Stomach (tissue), 19 donors: ENCODE measurements at regions of chr2 and their contacts with region 1.

Region 1: DNA sequence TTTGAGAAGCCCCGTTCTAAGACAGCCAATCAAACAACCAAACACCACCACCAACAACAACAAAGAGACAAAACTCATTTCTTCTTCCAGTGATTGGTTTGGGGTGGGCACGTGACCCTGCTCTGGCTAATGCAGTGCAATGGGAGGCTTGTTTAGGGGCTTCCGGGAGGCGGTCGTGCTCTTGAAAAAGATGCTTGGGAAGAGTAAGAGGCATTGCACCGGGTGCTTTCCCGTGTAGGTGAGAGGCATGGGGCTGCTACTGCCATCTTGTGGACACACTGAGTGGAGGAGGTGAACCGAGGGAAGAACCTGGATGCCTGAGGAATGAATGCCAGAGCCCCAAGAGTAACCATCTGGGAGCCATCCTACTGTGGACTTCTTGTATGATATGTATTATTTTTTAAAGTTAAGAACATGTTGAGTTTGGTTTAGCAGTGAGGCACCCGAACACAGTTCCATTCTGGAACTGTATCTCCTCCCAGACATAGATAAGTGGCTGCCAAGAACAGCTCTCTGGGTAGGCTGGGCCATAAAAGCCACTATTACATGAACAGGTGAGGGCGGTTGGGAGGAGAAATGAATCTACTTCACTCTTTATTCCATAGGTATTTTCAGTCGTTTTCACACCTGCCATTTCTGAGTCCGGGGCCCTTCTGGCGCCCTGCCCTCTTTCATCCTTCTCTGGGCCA is 19.1 kb upstream of the ARHGAP25 start:
- DNase-seq: peak; percentile 69 to 79
- H3K4me3 ChIP-seq: no peak overlapping the region
- H3K27ac ChIP-seq: peak overlapping the region in 2 of 5 donors; percentile 7 to 39
- H3K4me1 ChIP-seq: peaks cover 0 to 22% (median 8%) of the 10 kb centered on the region in 4 donors
- H3K27me3 ChIP-seq: no peaks in the 10 kb centered on the region
- CTCF ChIP-seq: peak in 5 of 7 experiments; percentile 20 to 65 (median 44)
- EP300 ChIP-seq: no peak
- POLR2A ChIP-seq: no peak

Region 2: GRCh38 chr2:68467077-68467960 is 248.2 kb before region 1 on chr2 and contains the starts of genes APLF and FBXO48:
- intact Hi-C with region 1: loop called (anchors 10 kb)
- DNase-seq: peak; percentile 98 to 99
- H3K4me3 ChIP-seq: peak within 1 kb of the TSS; percentile 57 to 94 (median 82)
- H3K27ac ChIP-seq: peak within 1 kb of the TSS; percentile 88 to 94 (median 91)
- H3K4me1 ChIP-seq: peaks cover 0 to 34% (median 14%) of the 10 kb centered on the region in 4 donors
- H3K27me3 ChIP-seq: no peaks in the 10 kb centered on the region
- CTCF ChIP-seq: no peak
- EP300 ChIP-seq: no peak
- POLR2A ChIP-seq: no peak
- total RNA-seq, gene APLF: 0.29 to 9.4 (median 5.5) TPM
- total RNA-seq, gene FBXO48: 0.43 to 1.2 (median 0.50) TPM in 4 of 5 donors, not detected in the other

Region 3: DNA sequence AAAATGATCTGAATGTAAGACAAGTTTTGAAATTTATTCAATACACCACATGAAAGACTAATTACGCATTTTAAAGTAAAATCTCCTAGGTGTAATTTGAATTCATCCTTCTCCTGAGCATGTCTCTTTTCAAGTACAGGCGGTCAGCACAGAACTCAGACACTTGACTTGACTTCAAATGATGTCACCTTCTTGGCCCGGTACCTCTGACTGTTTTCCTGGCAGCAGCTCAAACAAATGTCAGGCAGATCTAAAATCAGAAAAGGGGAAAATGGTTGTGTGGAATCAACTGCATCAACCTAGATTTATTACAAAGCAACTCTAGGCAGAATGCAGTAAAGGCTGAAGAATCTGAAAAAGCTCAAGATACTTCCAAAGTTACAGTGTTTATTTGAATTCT is 83.5 kb before region 1 on chr2:
- intact Hi-C with region 1: no loop called
- DNase-seq: no peak
- H3K4me3 ChIP-seq: no peak overlapping the region
- H3K27ac ChIP-seq: no peak overlapping the region
- H3K4me1 ChIP-seq: no peaks in the 10 kb centered on the region
- H3K27me3 ChIP-seq: no peaks in the 10 kb centered on the region
- CTCF ChIP-seq: no peak
- EP300 ChIP-seq: no peak
- POLR2A ChIP-seq: no peak

Region 4: GRCh38 chr2:68807821-68808266 is 92.3 kb after region 1 on chr2:
- intact Hi-C with region 1: no loop called
- DNase-seq: no peak
- H3K4me3 ChIP-seq: no peak overlapping the region
- H3K27ac ChIP-seq: no peak overlapping the region
- H3K4me1 ChIP-seq: peaks cover 0 to 9% (median 4%) of the 10 kb centered on the region in 4 donors
- H3K27me3 ChIP-seq: no peaks in the 10 kb centered on the region
- CTCF ChIP-seq: no peak
- EP300 ChIP-seq: no peak
- POLR2A ChIP-seq: no peak